ENCODE measurements at regions of chr4 and their contacts with region 1.

Region 1: DNA sequence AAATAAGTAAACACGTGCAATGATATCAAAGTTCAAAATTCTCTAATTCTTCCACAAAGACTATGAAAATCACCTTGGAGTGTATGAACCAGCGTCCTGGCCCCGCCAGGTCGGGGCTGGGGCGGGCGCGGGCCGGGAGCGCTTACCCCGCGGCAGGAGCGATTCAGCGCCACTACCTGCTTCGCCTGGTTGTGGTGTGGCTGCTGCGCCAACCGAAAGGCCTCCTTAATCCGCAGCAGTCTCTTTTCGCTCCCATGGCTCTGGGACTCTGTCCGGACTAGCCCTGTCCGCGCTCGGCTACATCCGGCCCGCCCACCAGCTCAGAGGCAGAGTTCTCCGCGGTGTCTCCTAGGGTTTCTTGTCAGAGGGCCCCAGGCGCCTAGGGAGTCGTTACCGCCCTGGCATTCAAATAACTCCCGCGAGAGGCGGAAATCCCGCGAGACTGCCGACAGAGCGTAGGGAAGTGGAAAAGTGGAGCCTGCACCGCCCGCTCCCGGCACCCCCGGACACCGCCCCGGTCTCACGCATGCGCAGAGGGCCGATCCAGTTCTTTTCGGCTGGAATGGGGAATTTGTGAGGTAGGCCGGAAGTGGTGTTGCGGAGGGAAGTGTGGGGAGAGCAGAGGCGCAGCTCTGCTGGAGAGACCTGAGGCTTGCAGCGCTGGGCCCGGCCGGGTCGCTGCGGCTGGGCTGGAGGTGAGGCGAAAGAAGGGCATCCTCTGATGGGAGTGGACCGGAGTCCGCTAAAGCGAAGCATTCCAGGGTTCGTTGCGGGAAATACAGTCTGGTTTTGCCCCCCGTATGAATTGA is at the start of gene FAM200B:
- DNase-seq: peak; percentile 98 to 100 (median 99)

Region 2: GRCh38 chr4:15655229-15656037 is 26.0 kb before region 1 on chr4 and contains the start of gene FBXL5:
- intact Hi-C with region 1: loop called (anchors 1 kb)
- DNase-seq: peak; percentile 52 to 97 (median 71)